ENCODE measurements at regions of chr3 and their contacts with region 1.

Region 1: GRCh38 chr3:18389108-18389733 is 35.9 kb downstream of the SATB1 start:
- DNase-seq: no peak
- ATAC-seq: no peak
- H3K4me3 Mint-ChIP-seq: no peak overlapping the region
- H3K27ac Mint-ChIP-seq: no peak overlapping the region
- H3K4me1 Mint-ChIP-seq: peaks cover 43% of the 10 kb centered on the region
- H3K27me3 Mint-ChIP-seq: no peaks in the 10 kb centered on the region

Region 2: DNA sequence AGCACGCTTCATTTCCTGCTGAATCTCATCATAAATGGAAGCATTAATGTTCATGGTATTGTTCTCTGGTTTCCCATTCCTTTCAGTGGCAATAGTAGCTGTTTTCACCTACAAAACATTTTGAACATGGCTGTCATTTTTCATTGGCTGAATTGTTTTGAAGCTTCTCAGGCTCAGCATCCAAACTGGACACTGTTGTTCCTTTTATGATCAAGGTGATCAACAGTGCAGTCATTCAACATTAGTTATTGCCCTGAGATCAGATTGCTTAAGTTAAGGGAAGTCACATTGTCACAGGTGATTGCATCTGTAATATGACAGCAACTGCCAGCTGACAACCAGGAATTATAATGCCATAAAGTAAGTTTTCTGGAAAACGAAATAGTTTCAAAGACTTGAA is 11.0 kb before region 1 on chr3:
- CTCF ChIA-PET with region 1: interaction called, 28 read pairs
- DNase-seq: no peak
- ATAC-seq: no peak
- H3K4me3 Mint-ChIP-seq: no peak overlapping the region
- H3K27ac Mint-ChIP-seq: peak overlapping the region; percentile 63
- H3K4me1 Mint-ChIP-seq: peaks cover 60% of the 10 kb centered on the region
- H3K27me3 Mint-ChIP-seq: no peaks in the 10 kb centered on the region

Region 3: GRCh38 chr3:18401300-18401961 is 12.2 kb after region 1 on chr3:
- CTCF ChIA-PET with region 1: interaction called, 14 read pairs
- DNase-seq: no peak
- ATAC-seq: peak; percentile 20
- H3K4me3 Mint-ChIP-seq: no peak overlapping the region
- H3K27ac Mint-ChIP-seq: no peak overlapping the region
- H3K4me1 Mint-ChIP-seq: peaks cover 82% of the 10 kb centered on the region
- H3K27me3 Mint-ChIP-seq: no peaks in the 10 kb centered on the region